SK-N-SH (cell line): ENCODE measurements at regions of chr6 and their contacts with region 1.

Region 1: GRCh38 chr6:108896111-108896661 is 48.0 kb downstream of the ARMC2 start:
- DNase-seq: no peak
- H3K4me3 ChIP-seq: no peak overlapping the region
- H3K27ac ChIP-seq: peak overlapping the region; percentile 72 to 76; a peak in 3 of 4 replicates
- H3K4me1 ChIP-seq: peaks cover 16 to 22% of the 10 kb centered on the region in 2 experiments
- H3K27me3 ChIP-seq: no peaks in the 10 kb centered on the region
- CTCF ChIP-seq: no peak
- EP300 ChIP-seq: no peak
- RAD21 ChIP-seq: no peak

Region 2: DNA sequence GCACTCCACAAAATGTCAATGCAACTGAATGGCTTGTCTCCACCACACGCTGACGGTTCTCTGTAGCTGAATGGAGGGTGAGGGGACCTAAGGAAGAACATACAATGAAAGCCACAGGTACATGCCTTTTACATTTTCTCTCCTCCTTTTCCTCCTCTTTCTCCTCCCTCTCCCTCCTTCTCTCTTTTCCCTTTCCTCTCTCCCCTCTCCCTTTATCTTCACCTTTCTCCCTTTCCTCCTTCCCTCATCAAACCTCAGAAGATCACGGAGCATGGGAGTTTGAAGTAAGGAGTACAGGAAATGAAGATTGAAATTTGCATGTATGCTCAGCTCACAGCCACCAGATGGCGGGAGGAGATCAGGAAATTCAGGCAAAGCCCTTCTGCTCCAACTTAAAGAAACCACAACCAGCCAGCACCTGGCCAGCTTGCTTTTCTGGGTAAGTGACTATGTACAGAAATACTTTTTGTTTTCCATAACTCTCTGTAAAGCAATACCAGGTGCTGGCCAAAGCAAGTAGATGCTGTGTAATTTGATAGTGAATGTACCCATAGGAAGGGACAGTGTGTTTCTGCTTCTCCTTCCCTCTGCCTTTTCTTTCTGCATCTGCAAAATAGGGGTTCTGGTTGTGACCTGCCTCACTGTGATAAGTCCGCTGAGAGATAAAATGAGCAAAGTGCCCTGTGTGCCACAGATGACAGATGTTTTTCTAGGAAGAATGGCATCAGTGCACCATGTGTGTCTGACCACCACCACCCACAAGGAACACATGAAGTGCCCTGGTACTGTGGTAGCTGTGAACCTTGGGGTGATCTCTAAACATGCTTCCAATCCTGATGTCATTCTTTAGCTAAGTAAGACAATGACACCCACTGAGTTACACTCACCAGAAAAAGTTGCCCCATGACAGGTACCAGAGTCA is 354.1 kb before region 1 on chr6:
- CTCF ChIA-PET with region 1: interaction called, 80 read pairs
- POLR2A ChIA-PET with region 1: no interaction called
- DNase-seq: peak; percentile 65
- H3K4me3 ChIP-seq: no peak overlapping the region; a peak in 1 of 4 replicates
- H3K27ac ChIP-seq: peak overlapping the region in 1 of 2 experiments; percentile 34; a peak in 1 of 4 replicates
- H3K4me1 ChIP-seq: peaks cover 0 to 13% of the 10 kb centered on the region in 2 experiments; a peak in 1 of 4 replicates
- H3K27me3 ChIP-seq: no peaks in the 10 kb centered on the region
- CTCF ChIP-seq: peak; percentile 92
- EP300 ChIP-seq: 0 out of 4 replicates have a peak, but pooled peaks of 1 of the 2 experiments have one; percentile 19
- RAD21 ChIP-seq: peak; percentile 99

Region 3: GRCh38 chr6:108558372-108559096 is 337.7 kb before region 1 on chr6:
- CTCF ChIA-PET with region 1: interaction called, 11 read pairs
- POLR2A ChIA-PET with region 1: interaction called, 3 read pairs
- DNase-seq: peak; percentile 89
- H3K4me3 ChIP-seq: peak overlapping the region; percentile 91 to 96
- H3K27ac ChIP-seq: peak overlapping the region; percentile 97 to 98
- H3K4me1 ChIP-seq: peaks cover 0 to 20% of the 10 kb centered on the region in 2 experiments; a peak in 2 of 4 replicates
- H3K27me3 ChIP-seq: no peaks in the 10 kb centered on the region
- CTCF ChIP-seq: no peak
- EP300 ChIP-seq: no peak
- RAD21 ChIP-seq: peak; percentile 29; the same call in 1 of the 2 replicates

Region 4: GRCh38 chr6:108835218-108835850 is 60.9 kb before region 1 on chr6:
- CTCF ChIA-PET with region 1: interaction called, 10 read pairs
- POLR2A ChIA-PET with region 1: no interaction called
- DNase-seq: peak; percentile 89
- H3K4me3 ChIP-seq: no peak overlapping the region; a peak in 1 of 4 replicates
- H3K27ac ChIP-seq: peak overlapping the region in 1 of 2 experiments; percentile 62; a peak in 2 of 4 replicates
- H3K4me1 ChIP-seq: peaks cover 0 to 13% of the 10 kb centered on the region in 2 experiments; a peak in 2 of 4 replicates
- H3K27me3 ChIP-seq: no peaks in the 10 kb centered on the region
- CTCF ChIP-seq: peak; percentile 93
- EP300 ChIP-seq: no peak
- RAD21 ChIP-seq: peak; percentile 91

Region 5: GRCh38 chr6:108883172-108883571 is 13.0 kb before region 1 on chr6:
- CTCF ChIA-PET with region 1: interaction called, 24 read pairs
- POLR2A ChIA-PET with region 1: no interaction called
- DNase-seq: no peak
- H3K4me3 ChIP-seq: no peak overlapping the region
- H3K27ac ChIP-seq: no peak overlapping the region
- H3K4me1 ChIP-seq: no peaks in the 10 kb centered on the region
- H3K27me3 ChIP-seq: no peaks in the 10 kb centered on the region
- CTCF ChIP-seq: no peak
- EP300 ChIP-seq: no peak
- RAD21 ChIP-seq: no peak